AG04449 (cell line): ENCODE measurements at regions of chr15 and their contacts with region 1.

Region 1: DNA sequence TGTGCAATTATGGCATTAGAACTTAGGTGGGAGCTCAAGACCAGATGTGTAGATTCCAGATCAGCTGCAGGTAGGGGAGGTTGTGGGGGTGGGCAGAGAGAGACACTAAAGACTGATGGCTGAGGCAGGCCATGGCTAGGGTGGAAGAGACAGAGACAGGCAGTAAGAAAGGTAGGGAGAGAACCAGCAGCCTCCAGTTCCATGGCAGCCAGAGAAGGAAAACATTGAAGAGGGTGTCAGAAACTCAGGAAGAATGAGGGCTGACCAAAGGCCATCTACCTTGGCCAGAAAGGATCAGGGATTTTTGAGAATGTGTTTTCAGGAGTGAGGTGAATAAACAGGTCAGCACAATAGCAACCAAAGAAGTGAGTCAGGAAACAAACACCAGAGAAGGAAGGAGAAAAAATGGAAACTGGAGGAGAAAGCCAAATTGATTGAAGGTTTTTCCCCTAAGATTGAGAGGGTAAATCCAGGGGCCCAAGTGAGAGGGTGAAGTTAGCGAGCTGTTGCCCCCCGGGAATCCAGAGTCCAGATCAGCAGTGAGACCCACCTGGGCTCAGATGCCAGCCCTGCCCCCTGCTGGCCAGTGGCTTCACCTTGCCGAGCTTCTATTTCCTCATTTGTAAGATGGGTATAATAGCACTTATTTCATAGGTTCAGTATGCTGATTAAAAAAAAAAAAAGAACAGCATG is 41.0 kb downstream of the ABHD2 start:
- DNase-seq: no peak
- H3K4me3 ChIP-seq: no peak overlapping the region
- CTCF ChIP-seq: peak; percentile 70

Region 2: GRCh38 chr15:88312941-88313579 is 816.2 kb before region 1 on chr15:
- CTCF ChIA-PET with region 1: no interaction called
- POLR2A ChIA-PET with region 1: no interaction called
- DNase-seq: peak; percentile 36
- H3K4me3 ChIP-seq: no peak overlapping the region
- CTCF ChIP-seq: no peak

Region 3: DNA sequence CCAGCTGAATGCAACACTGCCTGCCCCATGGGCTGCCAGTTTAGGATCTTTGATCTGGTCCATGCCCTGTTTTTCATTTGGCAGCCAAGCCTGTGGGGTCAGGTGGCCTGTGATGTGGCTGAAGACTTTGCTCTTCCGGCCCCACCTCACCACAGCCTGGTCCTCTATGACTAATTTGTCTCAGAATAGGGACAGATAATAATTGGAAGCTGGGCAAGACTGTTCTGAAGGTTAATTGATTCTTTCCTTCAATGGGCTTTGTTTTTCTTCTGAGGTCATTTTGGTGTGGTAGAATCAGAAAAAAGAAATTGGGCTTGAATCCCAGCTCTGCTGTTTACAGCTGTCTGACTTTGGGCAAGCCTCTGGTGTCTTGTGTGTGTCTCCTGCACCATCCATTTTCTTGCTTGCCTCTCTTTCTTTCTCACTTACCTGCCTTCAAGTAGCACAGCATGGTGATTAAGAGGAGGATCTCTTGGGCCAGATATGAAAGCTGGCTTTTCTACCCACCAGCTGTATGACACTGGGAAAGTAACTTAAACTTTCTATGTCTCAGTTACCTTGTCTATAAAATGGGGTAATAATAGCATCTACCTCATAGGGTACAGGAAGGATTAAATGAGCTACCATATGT is 16.8 kb before region 1 on chr15:
- CTCF ChIA-PET with region 1: interaction called, 36 read pairs
- POLR2A ChIA-PET with region 1: no interaction called
- DNase-seq: no peak
- H3K4me3 ChIP-seq: no peak overlapping the region
- CTCF ChIP-seq: no peak

Region 4: DNA sequence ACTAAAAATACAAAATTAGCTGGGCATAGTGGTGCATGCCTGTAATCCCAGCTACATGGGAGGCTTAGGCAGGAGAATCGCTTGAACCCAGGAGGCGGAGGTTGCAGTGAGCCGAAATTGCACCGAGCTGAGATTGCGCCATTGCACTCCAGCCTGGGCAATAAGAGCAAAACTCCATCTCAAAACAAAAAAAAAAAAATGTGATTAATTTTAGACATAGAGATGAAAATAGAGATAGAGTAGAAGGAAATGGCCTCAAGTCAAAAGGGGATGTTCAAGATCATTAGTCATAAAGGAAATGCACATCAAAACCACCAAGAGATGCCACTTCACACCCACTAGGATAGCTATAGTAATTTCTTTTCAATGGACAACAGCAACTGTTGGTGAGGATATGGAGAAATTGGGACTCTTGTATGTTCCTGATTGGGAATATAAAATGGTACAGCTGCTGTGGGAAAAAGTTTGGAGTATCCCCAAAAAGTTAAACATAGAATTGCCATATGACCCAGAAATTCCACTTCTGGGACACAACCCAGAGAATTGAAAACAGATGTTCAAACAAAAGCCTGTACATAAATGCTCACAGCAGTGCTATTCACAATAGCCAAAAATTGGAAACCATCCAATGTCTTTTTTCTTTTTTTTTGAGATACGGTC is 14.4 kb after region 1 on chr15:
- CTCF ChIA-PET with region 1: interaction called, 75 read pairs
- POLR2A ChIA-PET with region 1: no interaction called
- DNase-seq: no peak
- H3K4me3 ChIP-seq: no peak overlapping the region
- CTCF ChIP-seq: no peak

Region 5: DNA sequence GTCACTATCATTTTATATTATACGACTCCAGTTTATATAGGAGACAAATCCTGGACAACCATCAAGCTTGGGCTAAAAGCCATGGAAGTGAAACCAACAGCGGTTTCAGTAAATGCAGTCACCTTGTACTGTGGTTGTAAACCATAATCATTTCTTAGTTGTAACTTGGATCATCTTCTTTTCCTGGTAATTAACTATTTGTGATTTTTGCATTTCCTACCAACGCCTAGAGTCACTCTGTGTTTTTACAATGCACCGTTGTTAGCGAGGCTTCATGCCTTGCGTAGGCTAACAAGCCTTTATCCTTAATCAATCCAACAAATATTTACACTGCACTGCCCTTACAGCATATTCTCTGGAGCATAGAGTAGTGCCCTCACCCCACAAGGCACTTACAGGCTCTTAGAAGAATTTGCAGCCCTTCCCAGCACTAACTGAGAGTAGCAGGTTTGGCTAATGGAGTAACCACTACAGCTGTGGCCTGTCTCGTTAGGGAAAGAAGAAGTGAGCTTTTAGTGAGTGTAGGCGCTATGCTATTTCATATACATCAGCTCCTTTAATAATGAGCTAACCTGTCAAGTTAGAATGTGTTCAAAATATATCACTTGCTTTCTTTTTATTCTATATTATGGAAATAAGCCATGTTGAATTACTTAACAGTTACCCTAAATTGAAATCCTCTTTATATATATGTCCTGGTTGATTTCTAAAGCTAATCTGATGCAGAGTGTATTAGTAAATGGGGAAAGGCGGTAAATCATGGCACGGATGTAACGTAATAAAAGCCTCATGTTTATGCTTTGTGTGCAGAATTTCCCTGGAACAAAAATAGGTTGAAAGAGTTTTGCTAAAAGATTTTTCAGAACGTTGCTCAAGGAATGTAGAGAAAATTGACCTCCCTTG is 21.7 kb after region 1 on chr15:
- CTCF ChIA-PET with region 1: interaction called, 18 read pairs
- POLR2A ChIA-PET with region 1: no interaction called
- DNase-seq: no peak
- H3K4me3 ChIP-seq: no peak overlapping the region
- CTCF ChIP-seq: no peak